WTC11 (cell line): ENCODE measurements at regions of chr10 and their contacts with region 1.

Region 1: DNA sequence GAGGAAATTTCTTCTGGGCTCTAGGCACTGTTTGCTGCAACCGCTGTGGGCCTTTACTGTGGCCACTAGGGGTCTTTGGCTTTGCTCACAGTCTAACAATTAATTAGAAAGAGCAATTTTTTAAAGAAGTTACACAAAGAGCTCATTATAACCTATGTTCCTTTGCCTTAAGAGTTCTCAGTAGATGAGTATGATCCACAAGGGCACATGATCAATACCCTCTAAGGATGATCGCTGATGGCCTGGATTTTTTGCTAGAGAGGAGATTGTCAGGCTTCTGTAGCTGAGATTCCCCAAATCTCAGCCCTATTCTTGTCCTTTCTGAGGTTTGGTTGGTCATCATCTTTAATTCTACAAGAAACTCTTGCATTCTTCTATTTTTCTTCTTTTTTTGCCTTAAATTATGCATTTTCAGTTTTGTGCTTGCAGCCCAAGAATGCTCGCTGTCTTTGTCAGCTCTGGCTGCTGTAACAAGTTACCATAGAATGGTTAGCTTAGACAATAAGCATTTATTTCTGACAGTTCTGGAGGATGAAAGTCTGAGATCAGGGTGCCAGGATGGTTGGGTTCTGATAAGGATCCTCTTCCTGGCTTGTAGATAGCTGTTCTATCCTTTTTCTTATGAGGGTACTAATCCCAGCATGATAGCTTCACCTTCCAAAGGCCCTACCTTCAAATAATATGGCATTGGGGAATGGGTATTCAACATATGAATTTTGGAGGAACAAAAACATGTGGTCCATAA is 81.0 kb upstream of the RHOBTB1 start:
- DNase-seq: peak; percentile 37
- ATAC-seq: peak; percentile 98
- H3K4me3 Mint-ChIP-seq: no peak overlapping the region
- H3K27ac Mint-ChIP-seq: no peak overlapping the region
- H3K4me1 Mint-ChIP-seq: peaks cover 7% of the 10 kb centered on the region
- H3K27me3 Mint-ChIP-seq: no peaks in the 10 kb centered on the region
- CTCF ChIP-seq: peak; percentile 42; the same call in 1 of the 2 replicates

Region 2: DNA sequence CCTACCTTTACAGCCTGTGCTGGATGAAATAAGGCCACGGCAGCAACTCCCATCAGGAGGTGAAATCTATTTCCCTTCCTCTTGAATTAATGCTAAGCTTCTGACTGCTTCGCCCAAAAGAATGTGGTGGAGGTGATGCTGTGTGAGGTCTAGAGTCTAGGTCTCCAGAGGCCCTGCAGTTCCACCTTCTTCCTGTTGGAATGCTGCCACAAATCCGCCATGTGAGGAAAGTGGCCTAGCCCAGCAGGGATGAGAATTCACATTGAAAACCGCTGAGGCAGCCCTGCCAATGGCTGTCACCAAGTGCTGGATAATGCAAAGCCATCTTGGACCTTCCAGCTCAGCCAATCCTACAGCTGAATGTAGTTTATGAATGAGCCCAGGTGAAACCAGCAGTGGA is 109.0 kb before region 1 on chr10:
- CTCF ChIA-PET with region 1: no interaction called
- POLR2A ChIA-PET with region 1: no interaction called
- DNase-seq: peak; percentile 27
- ATAC-seq: peak; percentile 86
- H3K4me3 Mint-ChIP-seq: no peak overlapping the region
- H3K27ac Mint-ChIP-seq: no peak overlapping the region
- H3K4me1 Mint-ChIP-seq: peaks cover 7% of the 10 kb centered on the region
- H3K27me3 Mint-ChIP-seq: no peaks in the 10 kb centered on the region
- CTCF ChIP-seq: 0 out of 2 replicates have a peak, but pooled peaks have one; percentile 21

Region 3: GRCh38 chr10:61189912-61190311 is 164.9 kb after region 1 on chr10:
- CTCF ChIA-PET with region 1: interaction called, 10 read pairs
- POLR2A ChIA-PET with region 1: no interaction called
- DNase-seq: no peak
- ATAC-seq: no peak
- H3K4me3 Mint-ChIP-seq: no peak overlapping the region
- H3K27ac Mint-ChIP-seq: no peak overlapping the region
- H3K4me1 Mint-ChIP-seq: peaks cover 4% of the 10 kb centered on the region
- H3K27me3 Mint-ChIP-seq: no peaks in the 10 kb centered on the region
- CTCF ChIP-seq: no peak